ENCODE measurements at regions of chr11 and their contacts with region 1.

Region 1: GRCh38 chr11:108593214-108593922 is at the start of gene EXPH5:
- DNase-seq: peak; percentile 84 to 86
- ATAC-seq: peak; percentile 94 to 99 (median 98)
- H3K4me3 ChIP-seq: peak within 1 kb of the TSS; percentile 33 to 87 (median 64)
- H3K27ac ChIP-seq: no peak within 1 kb of the TSS
- H3K4me1 ChIP-seq: peaks cover 0 to 14% (median 5%) of the 10 kb centered on the region in 9 donors
- H3K27me3 ChIP-seq: peaks cover 0 to 34% (median 19%) of the 10 kb centered on the region in 7 donors
- CTCF ChIP-seq: no peak
- total RNA-seq, gene EXPH5: 0.77 to 8.4 (median 1.6) TPM

Region 2: GRCh38 chr11:108135845-108136544 is 457.4 kb before region 1 on chr11:
- intact Hi-C with region 1: no loop called
- DNase-seq: no peak
- ATAC-seq: peak in 1 of 8 donors; percentile 28
- H3K4me3 ChIP-seq: no peak overlapping the region
- H3K27ac ChIP-seq: peak overlapping the region in 1 of 10 donors; percentile 32
- H3K4me1 ChIP-seq: peaks cover 0 to 28% (median 6%) of the 10 kb centered on the region in 9 donors
- H3K27me3 ChIP-seq: no peaks in the 10 kb centered on the region
- CTCF ChIP-seq: peak in 3 of 9 donors; percentile 11 to 27 (median 16)

Region 3: GRCh38 chr11:108606495-108607160 is 13.3 kb after region 1 on chr11:
- intact Hi-C with region 1: loop called in 1 of 10 experiments (anchors 1 kb)
- DNase-seq: no peak
- ATAC-seq: no peak
- H3K4me3 ChIP-seq: no peak overlapping the region
- H3K27ac ChIP-seq: no peak overlapping the region
- H3K4me1 ChIP-seq: no peaks in the 10 kb centered on the region
- H3K27me3 ChIP-seq: peaks cover 0 to 17% (median 5%) of the 10 kb centered on the region in 7 donors
- CTCF ChIP-seq: no peak

Region 4: GRCh38 chr11:108620958-108621772 is 27.8 kb after region 1 on chr11:
- intact Hi-C with region 1: no loop called
- DNase-seq: no peak
- ATAC-seq: no peak
- H3K4me3 ChIP-seq: no peak overlapping the region
- H3K27ac ChIP-seq: no peak overlapping the region
- H3K4me1 ChIP-seq: no peaks in the 10 kb centered on the region
- H3K27me3 ChIP-seq: peaks cover 0 to 12% (median 0%) of the 10 kb centered on the region in 7 donors
- CTCF ChIP-seq: no peak